ENCODE measurements at regions of chr1 and their contacts with region 1.

Region 1: GRCh38 chr1:151739590-151740375 is 18.5 kb downstream of the RIIAD1 start:
- DNase-seq: no peak

Region 2: DNA sequence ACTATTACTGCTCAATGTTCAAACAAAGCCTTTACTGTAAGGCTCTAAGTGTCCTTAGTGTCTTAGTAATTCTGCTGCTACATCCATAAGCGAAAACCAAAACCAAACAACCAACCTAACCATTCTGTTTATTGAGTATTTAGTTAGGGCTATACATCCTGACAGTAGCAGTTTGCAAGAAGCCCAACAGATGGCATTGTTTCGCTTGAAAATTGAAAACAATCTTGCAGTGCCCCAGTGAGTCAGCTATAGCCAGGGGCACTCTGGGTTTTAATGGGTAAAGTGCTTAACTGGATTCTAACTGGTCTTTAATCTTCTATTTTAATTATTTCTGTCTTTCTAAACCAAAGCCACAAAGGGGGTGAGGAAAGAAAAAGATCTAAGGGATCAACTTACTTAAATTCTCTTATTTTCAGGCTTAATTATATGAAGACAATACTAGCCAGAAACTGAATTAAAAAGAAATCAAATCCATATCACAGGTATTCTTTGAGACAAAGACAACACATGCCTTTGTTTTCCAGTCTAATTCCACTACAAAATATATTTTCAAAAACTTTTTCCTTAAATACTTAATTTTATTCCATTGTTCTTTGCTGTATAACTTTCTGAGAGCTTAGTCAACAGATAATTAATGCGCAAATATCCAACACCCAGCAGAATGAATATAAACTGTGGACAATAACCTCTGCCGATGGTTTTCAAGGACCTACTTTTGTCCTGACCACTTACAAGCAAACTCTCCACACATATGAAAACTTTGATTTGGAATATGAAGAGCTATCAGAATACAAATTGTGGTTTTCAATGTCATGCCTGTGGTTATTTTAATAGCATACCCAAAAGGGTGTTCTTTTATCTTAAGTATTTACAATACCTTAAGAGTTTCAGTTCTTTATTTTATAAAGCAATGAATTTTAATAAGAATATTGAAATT is 295.7 kb before region 1 on chr1:
- intact Hi-C with region 1: loop called in 1 of 2 experiments (anchors 10 kb)
- DNase-seq: no peak

Region 3: DNA sequence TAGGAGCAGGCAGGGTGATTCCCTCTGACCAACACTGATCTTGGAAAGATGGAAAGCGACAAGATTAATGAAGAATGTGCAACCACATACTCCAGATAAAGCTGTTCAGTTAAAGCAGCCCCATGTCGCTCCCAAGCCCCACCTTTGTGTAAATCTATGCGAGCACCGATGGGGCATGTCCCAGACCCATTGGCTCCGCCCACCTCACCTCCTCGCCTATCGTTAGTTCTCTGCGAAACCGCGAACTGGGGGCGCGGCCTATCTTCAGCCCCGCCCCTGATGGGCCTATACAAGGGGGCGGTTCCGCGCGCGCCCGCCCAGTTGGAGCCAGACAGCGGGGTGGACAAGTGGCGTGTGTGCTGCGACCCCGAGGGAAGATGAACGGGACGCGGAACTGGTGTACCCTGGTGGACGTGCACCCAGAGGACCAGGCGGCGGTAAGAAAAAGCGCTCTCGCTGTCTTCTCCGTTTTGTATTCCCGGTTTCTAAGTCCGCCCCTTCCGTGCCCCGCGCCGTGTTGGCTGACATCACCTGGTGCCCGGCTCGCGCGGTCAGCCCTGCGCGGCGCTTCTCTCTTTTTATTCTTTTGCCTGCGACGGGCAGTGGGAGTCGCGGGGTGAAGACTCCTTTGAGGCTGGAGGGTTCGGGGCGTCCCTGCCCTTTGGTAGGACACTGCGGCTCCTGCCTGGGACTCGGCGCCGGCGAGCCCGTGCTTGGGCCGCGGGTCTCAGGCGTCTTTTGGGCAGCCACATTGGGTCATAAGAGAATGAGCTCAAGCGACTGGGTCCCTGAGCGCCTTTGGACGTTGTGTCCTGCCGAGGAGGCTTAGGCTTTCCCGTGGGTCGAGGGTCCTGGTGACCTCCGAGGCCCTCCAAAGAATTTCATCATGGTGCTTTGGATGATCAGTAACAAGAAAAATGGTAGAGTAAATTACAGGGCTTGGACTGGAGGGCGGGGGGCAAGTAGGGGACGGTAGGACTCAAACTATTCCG is 199.5 kb before region 1 on chr1 and contains the start of gene TUFT1:
- intact Hi-C with region 1: loop called (anchors 5 to 10 kb)
- DNase-seq: peak; percentile 97
- total RNA-seq, gene TUFT1: 5.4 to 6.6 TPM

Region 4: DNA sequence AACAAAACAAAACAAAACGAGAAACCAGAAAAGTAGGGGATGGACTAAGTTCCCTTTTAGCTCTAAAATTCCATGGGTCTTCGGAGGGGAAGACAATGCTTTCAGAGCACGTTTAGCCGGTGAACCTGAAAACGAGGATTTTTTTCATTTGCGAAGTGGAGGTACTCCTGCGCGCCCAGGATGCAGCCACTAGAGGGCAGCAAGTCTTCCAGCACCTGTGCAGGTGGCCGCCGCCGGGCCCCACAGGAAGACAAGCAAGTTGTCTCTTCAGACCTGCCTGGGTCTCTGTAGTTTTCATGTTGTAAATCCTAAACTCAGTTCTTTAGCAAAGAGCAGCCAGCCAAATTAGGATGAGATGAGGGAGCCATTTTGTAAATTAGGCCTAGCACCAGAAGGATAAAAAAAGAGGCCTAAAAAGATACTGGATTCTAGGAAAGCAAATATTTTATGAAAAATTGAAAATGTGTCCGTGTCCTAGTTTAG is 145.6 kb before region 1 on chr1:
- intact Hi-C with region 1: loop called in 1 of 2 experiments (anchors 5 kb)
- DNase-seq: peak; percentile 90

Region 5: DNA sequence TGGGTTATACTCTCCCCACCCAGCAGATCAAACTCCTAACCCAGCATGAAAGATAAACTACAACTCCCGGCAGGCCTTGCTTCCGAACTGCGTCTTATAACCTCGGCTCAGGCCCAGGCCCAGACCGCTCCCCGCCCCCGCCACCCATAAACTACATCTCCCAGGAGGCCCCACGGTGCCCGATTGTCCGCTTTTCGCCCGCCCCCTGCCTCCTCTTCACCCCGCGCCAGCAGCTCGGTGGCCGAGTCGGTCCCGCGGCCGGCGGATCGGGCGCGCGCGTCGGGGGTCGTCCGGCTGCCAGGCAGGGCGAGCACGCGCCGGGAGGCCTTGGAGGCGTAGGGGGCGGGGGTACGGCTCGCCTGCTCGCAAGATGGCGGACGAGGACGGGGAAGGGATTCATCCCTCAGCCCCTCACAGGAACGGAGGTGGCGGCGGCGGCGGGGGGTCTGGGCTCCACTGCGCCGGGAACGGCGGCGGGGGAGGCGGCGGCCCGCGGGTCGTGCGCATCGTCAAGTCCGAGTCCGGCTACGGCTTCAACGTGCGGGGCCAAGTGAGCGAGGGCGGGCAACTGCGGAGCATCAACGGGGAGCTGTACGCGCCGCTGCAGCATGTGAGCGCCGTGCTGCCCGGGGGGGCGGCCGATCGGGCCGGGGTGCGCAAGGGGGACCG is 127.8 kb before region 1 on chr1 and contains the start of gene SNX27:
- intact Hi-C with region 1: loop called in 1 of 2 experiments (anchors 10 kb)
- DNase-seq: peak; percentile 96
- total RNA-seq, gene SNX27: 40.1 to 41.9 TPM